ENCODE measurements at regions of chr4 and their contacts with region 1.

Region 1: GRCh38 chr4:95165926-95166524 is 382.7 kb downstream of the UNC5C start:
- DNase-seq: peak; percentile 74
- H3K4me3 ChIP-seq: no peak overlapping the region
- H3K27ac ChIP-seq: no peak overlapping the region
- H3K4me1 ChIP-seq: no peaks in the 10 kb centered on the region
- H3K27me3 ChIP-seq: no peaks in the 10 kb centered on the region
- CTCF ChIP-seq: peak; percentile 31
- POLR2A ChIP-seq: no peak

Region 2: DNA sequence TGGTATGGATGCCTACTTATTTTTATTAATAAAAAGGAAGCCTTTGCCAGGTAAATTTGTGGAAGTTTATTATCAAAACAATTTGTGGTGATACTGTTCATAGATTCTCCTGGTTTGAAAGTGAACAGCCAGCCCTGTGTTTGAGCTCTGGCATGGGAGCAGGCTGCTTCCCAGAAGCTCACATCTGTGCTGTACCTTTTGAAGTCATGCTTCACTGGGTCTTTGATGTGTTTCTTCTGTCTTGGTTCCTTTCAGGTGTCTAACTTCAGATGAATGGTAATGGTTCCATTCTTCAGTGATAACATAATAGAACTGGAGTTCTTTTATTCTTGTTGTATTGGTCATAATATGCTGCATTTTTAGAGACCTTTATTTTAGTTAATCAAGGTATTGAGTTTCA is 322.8 kb before region 1 on chr4:
- CTCF ChIA-PET with region 1: no interaction called
- POLR2A ChIA-PET with region 1: no interaction called
- dilution Hi-C with region 1: no loop called
- intact Hi-C with region 1: no loop called
- DNase-seq: no peak
- H3K4me3 ChIP-seq: no peak overlapping the region
- H3K27ac ChIP-seq: no peak overlapping the region
- H3K4me1 ChIP-seq: no peaks in the 10 kb centered on the region
- H3K27me3 ChIP-seq: no peaks in the 10 kb centered on the region
- CTCF ChIP-seq: no peak
- POLR2A ChIP-seq: no peak

Region 3: GRCh38 chr4:95362906-95363558 is 197.0 kb after region 1 on chr4:
- CTCF ChIA-PET with region 1: no interaction called
- POLR2A ChIA-PET with region 1: no interaction called
- dilution Hi-C with region 1: no loop called
- intact Hi-C with region 1: loop called (anchors 2 kb)
- DNase-seq: peak; percentile 54
- H3K4me3 ChIP-seq: no peak overlapping the region
- H3K27ac ChIP-seq: peak overlapping the region; percentile 1
- H3K4me1 ChIP-seq: peaks cover 10% of the 10 kb centered on the region
- H3K27me3 ChIP-seq: no peaks in the 10 kb centered on the region
- CTCF ChIP-seq: peak in 1 of 2 donors; percentile 20
- POLR2A ChIP-seq: no peak

Region 4: GRCh38 chr4:95549246-95550114 is 383.5 kb after region 1 on chr4:
- CTCF ChIA-PET with region 1: interaction called, 8 read pairs
- POLR2A ChIA-PET with region 1: no interaction called
- dilution Hi-C with region 1: no loop called
- intact Hi-C with region 1: loop called (anchors 2 kb)
- DNase-seq: peak; percentile 41
- H3K4me3 ChIP-seq: peak overlapping the region; percentile 55 to 88 (median 82)
- H3K27ac ChIP-seq: no peak overlapping the region
- H3K4me1 ChIP-seq: peaks cover 20% of the 10 kb centered on the region
- H3K27me3 ChIP-seq: peaks cover 38 to 42% of the 10 kb centered on the region in 2 experiments
- CTCF ChIP-seq: no peak
- POLR2A ChIP-seq: no peak

Region 5: DNA sequence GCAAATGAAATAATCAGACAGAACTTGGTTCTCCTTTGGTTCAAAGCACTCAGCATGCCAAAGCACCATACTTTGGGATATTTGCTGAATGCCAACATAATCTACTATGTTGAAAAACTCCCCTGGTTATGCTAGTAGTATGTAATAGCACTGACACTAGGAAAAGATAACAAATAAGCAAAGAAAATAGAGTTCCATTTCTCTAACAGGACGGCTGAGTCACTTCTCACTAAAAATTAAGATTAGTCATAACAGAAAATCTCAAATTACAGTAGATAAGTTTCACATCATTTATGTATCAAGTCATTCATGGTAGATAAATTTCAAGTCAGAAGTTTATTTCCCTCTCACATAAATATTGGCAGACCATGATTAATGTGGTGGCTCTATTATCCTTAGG is 691.7 kb after region 1 on chr4:
- CTCF ChIA-PET with region 1: no interaction called
- POLR2A ChIA-PET with region 1: no interaction called
- dilution Hi-C with region 1: no loop called
- intact Hi-C with region 1: loop called (anchors 10 kb)
- DNase-seq: no peak
- H3K4me3 ChIP-seq: no peak overlapping the region
- H3K27ac ChIP-seq: no peak overlapping the region
- H3K4me1 ChIP-seq: no peaks in the 10 kb centered on the region
- H3K27me3 ChIP-seq: no peaks in the 10 kb centered on the region
- CTCF ChIP-seq: no peak
- POLR2A ChIP-seq: no peak

Region 6: DNA sequence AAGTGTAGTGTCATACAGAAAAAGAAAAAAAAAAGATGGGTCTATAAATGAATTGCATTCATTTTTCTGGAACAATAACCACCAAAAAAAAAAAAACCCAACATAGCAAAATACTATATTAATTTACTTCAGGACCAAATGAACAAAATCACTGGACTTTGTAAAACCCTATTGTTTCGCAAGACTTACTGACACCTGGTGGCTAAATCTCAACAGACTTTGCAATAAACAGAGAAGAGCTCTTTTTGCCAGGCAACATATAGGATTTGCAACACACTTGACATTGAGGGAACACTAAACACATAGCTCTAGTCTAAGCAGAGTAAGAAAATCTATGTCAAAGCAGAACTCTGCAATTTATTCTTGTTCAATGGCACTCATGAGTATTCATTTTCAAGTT is 1987.0 kb after region 1 on chr4:
- CTCF ChIA-PET with region 1: interaction called, 12 read pairs
- POLR2A ChIA-PET with region 1: no interaction called
- dilution Hi-C with region 1: no loop called
- intact Hi-C with region 1: no loop called
- DNase-seq: peak; percentile 36
- H3K4me3 ChIP-seq: no peak overlapping the region
- H3K27ac ChIP-seq: no peak overlapping the region
- H3K4me1 ChIP-seq: no peaks in the 10 kb centered on the region
- H3K27me3 ChIP-seq: no peaks in the 10 kb centered on the region
- CTCF ChIP-seq: peak; percentile 9 to 36
- POLR2A ChIP-seq: no peak